Activated B cell treated with CpG ODN at 0.5 μM for 24 hours (primary cell): ENCODE measurements at regions of chr10 and their contacts with region 1.

Region 1: GRCh38 chr10:88270871-88271713 is 312.0 kb downstream of the RNLS start:
- DNase-seq: peak; percentile 16
- ATAC-seq: peak; percentile 93
- H3K4me3 Mint-ChIP-seq: peak overlapping the region; percentile 40
- H3K27ac Mint-ChIP-seq: peak overlapping the region; percentile 56
- H3K4me1 Mint-ChIP-seq: peaks cover 46% of the 10 kb centered on the region
- H3K27me3 Mint-ChIP-seq: no peaks in the 10 kb centered on the region
- CTCF ChIP-seq: no peak

Region 2: DNA sequence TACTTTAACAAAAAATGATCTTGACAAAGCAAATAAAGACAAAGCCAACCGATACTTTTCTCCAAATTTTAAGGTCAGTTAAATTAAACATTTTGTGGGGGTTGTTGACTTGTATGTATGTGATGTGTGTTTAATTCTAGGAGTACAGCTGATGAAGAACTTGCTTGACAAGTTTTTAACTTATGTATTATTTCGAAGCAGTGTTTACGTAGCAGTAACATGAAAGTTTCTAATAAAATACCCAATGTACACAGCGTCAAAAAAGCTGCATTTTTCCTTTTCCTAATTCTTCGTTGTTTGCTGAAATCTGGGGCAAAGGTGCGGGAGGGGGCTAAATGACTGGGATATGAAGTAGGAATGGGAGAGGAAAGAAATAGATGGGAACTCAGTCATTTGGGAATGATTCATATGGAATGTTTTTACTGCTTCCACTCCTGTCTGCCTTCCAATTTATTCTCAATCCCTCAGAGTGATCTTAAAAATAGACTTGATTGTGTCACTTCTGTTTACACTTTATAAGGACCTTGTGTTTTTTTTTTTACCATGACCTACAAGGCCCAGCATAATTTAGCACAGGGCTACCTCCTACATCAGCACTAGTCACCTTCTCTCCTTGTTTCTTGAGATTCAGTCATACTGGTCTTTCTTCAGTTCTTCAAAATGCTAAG is 309.9 kb before region 1 on chr10:
- CTCF ChIA-PET with region 1: no interaction called
- POLR2A ChIA-PET with region 1: no interaction called
- intact Hi-C with region 1: loop called (anchors 5 kb)
- DNase-seq: no peak
- ATAC-seq: no peak
- H3K4me3 Mint-ChIP-seq: no peak overlapping the region
- H3K27ac Mint-ChIP-seq: no peak overlapping the region
- H3K4me1 Mint-ChIP-seq: peaks cover 5% of the 10 kb centered on the region
- H3K27me3 Mint-ChIP-seq: no peaks in the 10 kb centered on the region
- CTCF ChIP-seq: no peak

Region 3: DNA sequence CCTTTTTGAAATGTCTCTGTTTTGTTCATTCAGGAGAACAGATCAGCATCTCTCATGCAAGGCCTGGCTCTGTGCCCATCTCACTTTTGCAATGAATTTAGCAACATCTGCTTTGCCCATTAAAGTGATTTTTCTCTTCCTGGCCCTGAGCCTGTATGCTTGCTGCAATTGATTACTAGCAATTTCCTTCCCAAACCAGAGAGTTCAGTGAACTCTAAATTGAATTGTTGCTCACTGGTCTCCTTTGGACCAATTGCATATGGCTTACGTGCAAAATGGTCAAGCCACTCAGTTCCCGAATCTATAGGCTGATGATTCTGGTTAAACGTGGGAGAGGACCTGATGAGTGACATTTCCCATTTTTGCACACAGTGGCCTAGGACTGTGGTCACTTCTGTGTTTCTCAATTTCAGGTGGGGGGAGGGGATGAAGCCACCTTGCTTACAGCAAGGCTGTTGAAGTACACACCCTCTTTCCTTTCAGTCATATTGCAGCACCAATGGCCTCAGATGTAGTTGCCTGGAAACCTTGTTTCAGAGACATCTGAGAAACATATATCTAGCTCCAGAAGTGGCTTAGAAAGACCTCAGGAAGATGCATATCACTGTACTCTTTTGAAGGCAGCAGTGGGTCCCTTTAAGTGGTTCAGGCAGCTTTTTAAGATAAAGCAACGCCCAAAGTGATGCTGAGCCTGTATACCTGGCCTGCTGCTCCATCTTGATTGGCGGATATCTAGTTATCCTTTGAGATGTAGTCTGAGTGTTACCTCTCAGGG is 206.3 kb before region 1 on chr10:
- CTCF ChIA-PET with region 1: no interaction called
- POLR2A ChIA-PET with region 1: no interaction called
- intact Hi-C with region 1: loop called (anchors 5 kb)
- DNase-seq: no peak
- ATAC-seq: no peak
- H3K4me3 Mint-ChIP-seq: no peak overlapping the region
- H3K27ac Mint-ChIP-seq: no peak overlapping the region
- H3K4me1 Mint-ChIP-seq: peaks cover 95% of the 10 kb centered on the region
- H3K27me3 Mint-ChIP-seq: no peaks in the 10 kb centered on the region
- CTCF ChIP-seq: no peak

Region 4: DNA sequence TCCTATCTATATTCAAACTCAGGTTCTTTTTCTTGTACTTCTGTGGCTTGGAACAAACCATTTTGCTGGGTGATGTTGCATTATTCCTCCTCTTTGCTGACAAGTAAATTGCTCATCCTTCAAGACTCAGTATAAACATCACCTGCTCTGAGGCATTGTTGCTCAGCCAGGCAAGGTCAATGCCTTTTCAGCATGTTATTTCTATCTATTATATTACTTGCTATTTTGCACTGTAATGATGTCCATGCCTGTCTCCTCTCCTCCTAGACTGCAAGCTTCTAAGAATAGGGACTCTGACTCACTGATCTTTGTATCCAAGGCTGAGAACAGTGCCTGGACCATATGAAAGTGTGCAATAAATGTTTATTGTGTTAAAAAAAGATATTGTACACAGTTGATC is 18.2 kb after region 1 on chr10:
- CTCF ChIA-PET with region 1: no interaction called
- POLR2A ChIA-PET with region 1: no interaction called
- intact Hi-C with region 1: no loop called
- DNase-seq: no peak
- ATAC-seq: no peak
- H3K4me3 Mint-ChIP-seq: no peak overlapping the region
- H3K27ac Mint-ChIP-seq: no peak overlapping the region
- H3K4me1 Mint-ChIP-seq: peaks cover 44% of the 10 kb centered on the region
- H3K27me3 Mint-ChIP-seq: no peaks in the 10 kb centered on the region
- CTCF ChIP-seq: no peak

Region 5: GRCh38 chr10:88322324-88323063 is 51.4 kb after region 1 on chr10:
- CTCF ChIA-PET with region 1: no interaction called
- POLR2A ChIA-PET with region 1: no interaction called
- intact Hi-C with region 1: loop called (anchors 1 kb)
- DNase-seq: no peak
- ATAC-seq: peak; percentile 88
- H3K4me3 Mint-ChIP-seq: peak overlapping the region; percentile 39
- H3K27ac Mint-ChIP-seq: peak overlapping the region; percentile 78
- H3K4me1 Mint-ChIP-seq: peaks cover 40% of the 10 kb centered on the region
- H3K27me3 Mint-ChIP-seq: no peaks in the 10 kb centered on the region
- CTCF ChIP-seq: no peak